Natural killer cell (primary cell): ENCODE measurements at regions of chr16 and their contacts with region 1.

Region 1: DNA sequence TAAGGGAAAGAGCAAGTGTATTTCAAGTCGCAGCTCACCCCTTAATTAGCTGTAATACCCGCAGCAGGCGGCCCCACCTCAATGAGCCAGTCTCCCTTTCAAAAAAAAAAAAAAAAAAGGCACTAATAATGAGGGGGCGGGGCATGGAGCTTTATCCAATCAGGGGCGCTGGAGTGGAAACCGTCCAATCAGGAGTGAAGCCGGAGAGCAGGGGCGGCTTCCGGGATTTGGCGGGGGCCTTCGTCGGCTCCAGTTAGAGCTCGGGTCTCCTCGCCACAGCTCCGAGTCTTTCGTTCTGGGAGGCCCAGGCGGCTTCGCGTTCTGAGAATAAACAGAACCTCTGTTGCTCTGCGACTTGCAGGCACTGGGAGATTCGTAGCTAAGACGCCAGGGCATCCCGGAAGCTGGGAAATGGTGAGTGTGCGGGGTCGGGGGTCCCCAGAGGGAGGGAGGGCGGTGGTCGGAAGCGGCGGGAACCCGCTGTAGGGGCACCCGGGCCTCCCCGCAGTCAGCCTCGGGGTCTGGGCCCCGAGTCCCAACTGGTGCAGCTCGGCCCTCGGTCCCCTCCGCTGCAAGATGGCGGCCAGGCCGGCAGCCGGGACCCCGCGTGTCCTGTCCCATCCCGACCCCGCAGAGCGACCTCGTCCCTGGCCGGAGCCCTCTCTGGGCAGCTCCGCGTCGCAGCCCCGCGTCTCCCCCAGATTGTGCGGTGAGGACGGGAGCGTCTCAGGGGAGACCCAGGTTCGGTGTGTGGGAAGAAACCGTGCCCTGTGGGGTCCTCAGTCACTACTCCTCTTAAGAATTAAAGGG is at the start of gene ZNF267:
- DNase-seq: peak; percentile 90 to 96
- ATAC-seq: peak; percentile 75 to 90 (median 88)
- H3K4me3 ChIP-seq: peak within 1 kb of the TSS; percentile 97
- H3K4me3 Mint-ChIP-seq: peak within 1 kb of the TSS; percentile 96
- H3K27ac ChIP-seq: peak within 1 kb of the TSS; percentile 95
- H3K27ac Mint-ChIP-seq: peak within 1 kb of the TSS; percentile 92 to 94
- H3K4me1 ChIP-seq: peaks cover 55% of the 10 kb centered on the region
- H3K4me1 Mint-ChIP-seq: peaks cover 60 to 61% of the 10 kb centered on the region in 2 donors
- H3K27me3 ChIP-seq: no peaks in the 10 kb centered on the region
- H3K27me3 Mint-ChIP-seq: no peaks in the 10 kb centered on the region
- CTCF ChIP-seq: no peak
- total RNA-seq, gene ZNF267: 45.0 to 56.6 (median 52.8) TPM

Region 2: DNA sequence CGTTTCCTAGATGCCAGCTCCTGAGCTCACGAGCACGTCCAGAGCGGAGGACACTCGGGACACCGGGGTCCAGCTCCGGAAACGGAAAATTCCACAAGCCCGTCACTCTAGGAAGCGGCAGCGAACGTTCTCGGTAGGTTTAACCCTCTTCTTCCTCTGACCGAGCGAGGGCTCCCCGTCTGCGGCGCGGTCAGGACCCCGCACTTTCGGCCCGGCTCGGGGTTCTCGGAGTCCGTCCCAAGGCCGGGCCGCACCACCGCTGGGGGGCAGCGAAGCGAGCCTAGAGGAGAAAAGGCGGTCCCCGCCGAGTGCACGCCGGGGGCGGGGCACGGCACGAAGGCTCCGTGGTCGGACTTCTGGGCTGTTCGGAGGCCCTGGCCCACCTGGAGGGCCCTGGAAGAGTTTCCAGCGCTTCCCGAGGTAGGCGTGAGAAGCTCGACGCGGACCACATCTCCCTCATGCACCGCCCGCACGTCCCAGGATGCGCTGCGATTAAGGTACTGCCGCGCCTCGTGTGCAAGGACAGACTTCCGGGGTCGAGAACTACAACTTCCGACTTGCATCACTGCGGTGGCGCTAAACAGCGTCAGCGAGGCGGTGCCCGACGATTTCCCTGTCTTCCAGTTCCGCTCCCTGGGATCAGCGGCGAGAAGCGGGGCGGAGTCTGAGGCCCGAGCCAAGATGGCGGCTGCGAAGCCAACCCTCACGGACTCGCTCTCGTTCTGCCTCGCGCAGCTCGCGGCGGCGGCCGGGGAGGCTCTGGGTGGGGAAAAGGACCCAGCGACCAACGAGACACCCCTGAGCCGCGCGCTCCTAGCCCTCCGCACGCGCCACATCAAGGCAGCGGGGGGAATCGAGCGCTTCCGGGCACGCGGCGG is 414.7 kb before region 1 on chr16 and contains the start of gene ARMC5:
- intact Hi-C with region 1: loop called (anchors 5 kb)
- DNase-seq: peak; percentile 92 to 99
- ATAC-seq: peak; percentile 68 to 84 (median 70)
- H3K4me3 ChIP-seq: peak within 1 kb of the TSS; percentile 85
- H3K4me3 Mint-ChIP-seq: peak within 1 kb of the TSS; percentile 94
- H3K27ac ChIP-seq: peak within 1 kb of the TSS; percentile 97
- H3K27ac Mint-ChIP-seq: peak within 1 kb of the TSS; percentile 94 to 97
- H3K4me1 ChIP-seq: peaks cover 60% of the 10 kb centered on the region
- H3K4me1 Mint-ChIP-seq: peaks cover 26 to 37% of the 10 kb centered on the region in 2 donors
- H3K27me3 ChIP-seq: no peaks in the 10 kb centered on the region
- H3K27me3 Mint-ChIP-seq: no peaks in the 10 kb centered on the region
- CTCF ChIP-seq: peak; percentile 58
- total RNA-seq, gene ARMC5: 10.4 to 22.8 (median 16.6) TPM

Region 3: DNA sequence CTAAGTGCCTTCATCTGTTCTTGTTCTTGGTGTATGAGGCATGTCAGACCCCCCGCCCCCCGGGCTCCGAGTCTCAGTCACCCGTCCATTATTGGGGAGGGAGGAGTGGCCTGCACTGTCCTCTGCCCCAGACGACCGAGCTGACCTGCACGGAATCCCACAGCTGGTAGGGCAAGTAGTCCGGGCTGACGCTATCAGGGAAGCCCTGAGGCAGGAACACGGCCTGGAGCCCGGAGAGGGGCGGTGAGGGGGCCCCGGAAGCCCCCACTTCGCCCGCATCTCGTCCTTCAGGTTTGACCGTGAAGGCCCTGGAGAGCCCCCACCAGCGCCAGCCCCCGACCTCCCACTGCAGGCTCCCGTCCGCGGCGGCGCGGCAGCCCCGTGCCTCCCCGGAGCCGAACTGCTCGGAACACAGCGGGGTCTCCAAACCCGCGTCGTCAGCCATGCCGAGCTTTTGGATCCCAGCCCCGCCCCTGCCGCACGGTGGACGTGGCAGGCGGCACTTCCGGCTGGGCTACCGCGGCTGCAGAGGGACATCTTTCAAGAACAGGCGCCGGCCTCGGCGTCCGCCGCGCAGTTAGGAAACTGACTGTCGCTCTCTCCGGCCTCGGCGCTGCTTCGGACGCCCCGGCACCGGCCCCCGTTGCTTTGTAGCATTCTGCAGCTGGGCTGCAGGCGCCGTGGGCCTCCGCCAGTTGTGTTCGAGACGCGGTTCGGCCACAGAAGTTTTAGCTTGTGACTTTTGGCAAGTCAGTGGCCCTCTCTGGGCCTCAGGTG is 365.6 kb before region 1 on chr16 and contains the start of gene RUSF1:
- intact Hi-C with region 1: loop called (anchors 5 kb)
- DNase-seq: peak; percentile 80 to 88
- ATAC-seq: peak; percentile 92 to 94 (median 93)
- H3K4me3 ChIP-seq: peak within 1 kb of the TSS; percentile 89
- H3K4me3 Mint-ChIP-seq: peak within 1 kb of the TSS; percentile 87
- H3K27ac ChIP-seq: peak within 1 kb of the TSS; percentile 87
- H3K27ac Mint-ChIP-seq: peak within 1 kb of the TSS; percentile 91 to 92
- H3K4me1 ChIP-seq: peaks cover 27% of the 10 kb centered on the region
- H3K4me1 Mint-ChIP-seq: peaks cover 32 to 38% of the 10 kb centered on the region in 2 donors
- H3K27me3 ChIP-seq: no peaks in the 10 kb centered on the region
- H3K27me3 Mint-ChIP-seq: no peaks in the 10 kb centered on the region
- CTCF ChIP-seq: no peak
- total RNA-seq, gene RUSF1: 50.2 to 61.5 (median 51.9) TPM